ENCODE measurements at regions of chr6 and their contacts with region 1.

Region 1: GRCh38 chr6:42771741-42772100 is 10.1 kb upstream of the BICRAL start:
- DNase-seq: peak in 8 of 14 experiments; percentile 20 to 84 (median 41)
- ATAC-seq: peak; percentile 27
- H3K4me3 ChIP-seq: peak overlapping the region; percentile 19
- H3K4me3 Mint-ChIP-seq: peak overlapping the region; percentile 76
- H3K27ac ChIP-seq: peak overlapping the region; percentile 92 to 94
- H3K27ac Mint-ChIP-seq: peak overlapping the region; percentile 99
- H3K4me1 ChIP-seq: peaks cover 75% of the 10 kb centered on the region
- H3K4me1 Mint-ChIP-seq: peaks cover 75% of the 10 kb centered on the region
- H3K27me3 ChIP-seq: no peaks in the 10 kb centered on the region
- H3K27me3 Mint-ChIP-seq: no peaks in the 10 kb centered on the region
- CTCF ChIP-seq: no peak

Region 2: GRCh38 chr6:42726485-42727086 is 45.1 kb before region 1 on chr6:
- CTCF ChIA-PET with region 1: interaction called, 22 read pairs
- POLR2A ChIA-PET with region 1: interaction called, 68 read pairs
- intact Hi-C with region 1: loop called (anchors 1 to 5 kb)
- DNase-seq: peak; percentile 54 to 95 (median 66)
- ATAC-seq: peak; percentile 97
- H3K4me3 ChIP-seq: peak overlapping the region; percentile 54
- H3K4me3 Mint-ChIP-seq: peak overlapping the region; percentile 87
- H3K27ac ChIP-seq: peak overlapping the region; percentile 64 to 65
- H3K27ac Mint-ChIP-seq: peak overlapping the region; percentile 90
- H3K4me1 ChIP-seq: peaks cover 14% of the 10 kb centered on the region
- H3K4me1 Mint-ChIP-seq: peaks cover 19% of the 10 kb centered on the region
- H3K27me3 ChIP-seq: no peaks in the 10 kb centered on the region
- H3K27me3 Mint-ChIP-seq: no peaks in the 10 kb centered on the region
- CTCF ChIP-seq: peak; percentile 90

Region 3: DNA sequence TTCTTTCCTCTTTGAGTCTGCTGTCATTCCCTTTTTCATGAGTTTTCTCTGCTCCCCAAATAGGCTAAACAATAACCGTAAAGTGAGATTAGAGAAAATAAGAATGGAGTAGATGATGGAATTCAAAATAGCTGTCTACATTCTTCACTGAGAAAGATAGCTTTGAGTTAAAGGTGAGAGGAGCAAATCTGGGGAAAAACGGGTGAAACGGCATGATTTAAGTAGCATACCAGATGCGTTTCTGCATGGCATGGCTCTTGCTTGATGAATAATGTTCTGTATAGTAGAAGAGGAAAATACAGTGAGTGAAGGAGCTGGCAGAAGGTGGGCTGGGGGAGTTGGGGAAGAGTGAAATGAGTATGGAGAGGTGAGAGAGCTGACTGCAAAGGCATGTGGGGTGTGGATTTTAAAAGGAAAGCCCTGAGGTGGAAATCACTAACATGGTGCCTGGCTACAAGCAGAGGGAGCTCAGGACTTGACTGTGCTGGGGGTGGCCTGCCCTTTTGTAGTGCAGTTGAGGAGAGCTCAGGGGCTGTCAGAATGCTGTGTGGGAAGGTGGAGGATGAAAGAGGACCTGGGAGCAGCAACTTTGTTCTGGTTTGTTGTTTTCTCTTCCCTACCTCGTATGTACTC is 18.9 kb after region 1 on chr6:
- CTCF ChIA-PET with region 1: interaction called, 11 read pairs
- POLR2A ChIA-PET with region 1: interaction called, 724 read pairs
- intact Hi-C with region 1: no loop called
- DNase-seq: peak in 1 of 14 experiments; percentile 32
- ATAC-seq: no peak
- H3K4me3 ChIP-seq: no peak overlapping the region
- H3K4me3 Mint-ChIP-seq: no peak overlapping the region
- H3K27ac ChIP-seq: peak overlapping the region in 1 of 2 donors; percentile 11
- H3K27ac Mint-ChIP-seq: no peak overlapping the region
- H3K4me1 ChIP-seq: peaks cover 47% of the 10 kb centered on the region
- H3K4me1 Mint-ChIP-seq: peaks cover 28% of the 10 kb centered on the region
- H3K27me3 ChIP-seq: no peaks in the 10 kb centered on the region
- H3K27me3 Mint-ChIP-seq: no peaks in the 10 kb centered on the region
- CTCF ChIP-seq: no peak

Region 4: DNA sequence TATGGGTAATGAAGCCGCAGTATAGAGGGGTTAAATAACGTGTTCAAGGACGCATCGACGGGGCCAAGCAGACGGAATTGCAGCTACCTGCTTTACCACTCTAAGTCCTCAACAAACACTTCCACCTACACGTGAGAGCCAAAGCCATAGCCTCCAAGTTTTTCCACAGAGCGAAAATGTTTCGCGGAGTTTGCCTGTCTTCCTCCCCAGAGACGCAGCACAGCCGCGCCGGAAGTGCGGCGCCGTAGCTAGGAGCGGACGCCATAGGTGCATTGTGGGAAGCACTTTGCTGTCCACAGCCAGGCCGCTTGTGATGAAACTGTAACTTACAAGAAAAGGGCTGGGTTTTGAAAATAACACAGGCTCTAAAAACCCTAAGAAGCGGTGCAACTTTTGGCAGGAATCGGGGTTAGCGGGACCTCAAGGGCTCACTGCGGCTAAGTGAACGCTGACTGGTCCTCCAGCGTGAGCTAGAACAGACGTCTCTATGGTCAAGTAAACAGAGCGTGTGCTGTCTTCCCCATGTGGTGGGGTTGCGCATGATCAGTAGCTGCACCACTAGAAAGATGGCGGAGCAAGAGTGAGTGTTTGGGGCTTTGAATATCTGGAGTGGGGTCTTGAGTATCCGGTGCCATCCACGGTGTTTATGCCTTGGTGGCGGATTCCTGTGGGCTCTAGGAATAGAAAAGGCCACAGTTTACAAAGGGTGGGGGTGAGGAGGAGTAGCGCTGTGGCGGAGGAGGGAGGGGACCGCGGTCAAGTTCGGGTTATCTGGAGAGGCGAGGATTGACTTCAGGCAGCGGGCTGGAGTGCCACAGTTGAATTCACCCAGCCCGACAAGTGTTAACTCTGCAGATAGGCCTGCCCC is 107.9 kb after region 1 on chr6 and contains the start of gene RPL7L1:
- CTCF ChIA-PET with region 1: no interaction called
- POLR2A ChIA-PET with region 1: interaction called, 55 read pairs
- intact Hi-C with region 1: no loop called
- DNase-seq: peak; percentile 68 to 93 (median 79)
- ATAC-seq: peak; percentile 92
- H3K4me3 ChIP-seq: peak within 1 kb of the TSS; percentile 69
- H3K4me3 Mint-ChIP-seq: peak within 1 kb of the TSS; percentile 93
- H3K27ac ChIP-seq: peak within 1 kb of the TSS; percentile 94 to 95
- H3K27ac Mint-ChIP-seq: peak within 1 kb of the TSS; percentile 97
- H3K4me1 ChIP-seq: peaks cover 41% of the 10 kb centered on the region
- H3K4me1 Mint-ChIP-seq: peaks cover 23% of the 10 kb centered on the region
- H3K27me3 ChIP-seq: no peaks in the 10 kb centered on the region
- H3K27me3 Mint-ChIP-seq: no peaks in the 10 kb centered on the region
- CTCF ChIP-seq: no peak
- total RNA-seq, gene RPL7L1: 76.1 TPM

Measured in CD4-positive, alpha-beta T cell (primary cell).